Caco-2 (cell line): ENCODE measurements at regions of chr18 and their contacts with region 1.

Region 1: GRCh38 chr18:67104700-67105284 is 411.7 kb downstream of the DSEL start:
- DNase-seq: peak; percentile 41 to 57
- H3K4me3 ChIP-seq: no peak overlapping the region
- H3K4me3 Mint-ChIP-seq: no peak overlapping the region
- H3K27ac Mint-ChIP-seq: no peak overlapping the region
- H3K4me1 ChIP-seq: no peaks in the 10 kb centered on the region
- H3K4me1 Mint-ChIP-seq: no peaks in the 10 kb centered on the region
- H3K27me3 ChIP-seq: no peaks in the 10 kb centered on the region
- H3K27me3 Mint-ChIP-seq: peaks cover 3% of the 10 kb centered on the region
- CTCF ChIP-seq: peak; percentile 54 to 66

Region 2: DNA sequence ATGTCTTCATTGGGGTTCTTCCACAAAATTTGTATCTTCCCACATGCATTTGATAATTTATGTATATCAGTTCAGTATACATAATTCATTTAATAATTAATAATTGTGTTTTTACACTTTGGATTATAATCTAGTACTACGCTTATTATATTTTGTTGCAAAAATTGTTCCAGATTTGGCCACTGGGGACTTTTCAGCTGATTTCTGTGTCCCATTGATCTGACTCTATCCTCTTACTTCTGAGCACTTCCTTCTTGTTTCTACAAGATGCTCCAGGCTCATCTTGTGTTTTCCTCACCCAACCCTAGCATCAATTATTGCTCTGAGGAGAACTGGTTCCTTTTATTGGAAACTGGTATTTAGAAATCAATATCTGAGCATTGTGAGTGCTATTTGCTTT is 285.6 kb before region 1 on chr18:
- CTCF ChIA-PET with region 1: no interaction called
- POLR2A ChIA-PET with region 1: no interaction called
- intact Hi-C with region 1: no loop called
- DNase-seq: no peak
- H3K4me3 ChIP-seq: no peak overlapping the region
- H3K4me3 Mint-ChIP-seq: no peak overlapping the region
- H3K27ac Mint-ChIP-seq: no peak overlapping the region
- H3K4me1 ChIP-seq: no peaks in the 10 kb centered on the region
- H3K4me1 Mint-ChIP-seq: no peaks in the 10 kb centered on the region
- H3K27me3 ChIP-seq: no peaks in the 10 kb centered on the region
- H3K27me3 Mint-ChIP-seq: no peaks in the 10 kb centered on the region
- CTCF ChIP-seq: peak in 1 of 2 experiments; percentile 11

Region 3: DNA sequence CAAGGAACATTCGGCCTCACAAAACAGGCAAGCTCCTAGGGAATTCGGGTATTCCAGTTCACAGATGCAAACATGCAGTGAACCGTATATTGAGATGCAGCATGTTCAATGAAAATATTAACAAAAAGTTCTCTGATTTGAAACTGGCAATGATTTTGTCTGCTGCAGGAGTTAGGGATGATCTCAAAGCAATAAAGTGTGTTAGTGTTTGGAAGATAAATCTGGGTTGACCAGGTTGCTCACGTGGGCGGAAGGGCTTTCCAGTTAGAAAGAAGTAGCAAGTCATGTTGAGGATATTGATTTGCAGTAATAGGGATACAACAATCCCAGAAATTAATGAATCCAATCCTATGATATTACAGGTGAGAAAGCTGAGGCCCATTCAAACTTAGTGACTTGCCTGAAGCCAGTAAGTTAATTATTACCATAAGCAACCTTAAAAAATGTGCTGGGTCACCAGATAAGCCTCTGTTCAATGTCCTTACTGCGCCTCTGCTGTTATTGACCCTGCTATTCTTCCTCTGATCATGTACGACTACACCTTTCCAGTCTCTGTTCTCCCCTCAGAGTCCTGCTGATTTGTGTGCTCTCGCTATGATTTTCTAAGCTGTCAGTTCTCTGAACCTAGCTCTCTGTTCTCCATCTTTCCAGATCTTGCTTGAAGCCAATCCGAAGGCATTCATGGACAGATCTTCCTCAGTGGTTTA is 40.9 kb after region 1 on chr18:
- CTCF ChIA-PET with region 1: no interaction called
- POLR2A ChIA-PET with region 1: no interaction called
- intact Hi-C with region 1: loop called (anchors 1 kb)
- DNase-seq: peak; percentile 22 to 31
- H3K4me3 ChIP-seq: no peak overlapping the region
- H3K4me3 Mint-ChIP-seq: peak overlapping the region; percentile 28
- H3K27ac Mint-ChIP-seq: peak overlapping the region; percentile 4
- H3K4me1 ChIP-seq: peaks cover 7% of the 10 kb centered on the region; the same call in 1 of the 2 replicates
- H3K4me1 Mint-ChIP-seq: peaks cover 10% of the 10 kb centered on the region
- H3K27me3 ChIP-seq: no peaks in the 10 kb centered on the region
- H3K27me3 Mint-ChIP-seq: no peaks in the 10 kb centered on the region
- CTCF ChIP-seq: no peak

Region 4: DNA sequence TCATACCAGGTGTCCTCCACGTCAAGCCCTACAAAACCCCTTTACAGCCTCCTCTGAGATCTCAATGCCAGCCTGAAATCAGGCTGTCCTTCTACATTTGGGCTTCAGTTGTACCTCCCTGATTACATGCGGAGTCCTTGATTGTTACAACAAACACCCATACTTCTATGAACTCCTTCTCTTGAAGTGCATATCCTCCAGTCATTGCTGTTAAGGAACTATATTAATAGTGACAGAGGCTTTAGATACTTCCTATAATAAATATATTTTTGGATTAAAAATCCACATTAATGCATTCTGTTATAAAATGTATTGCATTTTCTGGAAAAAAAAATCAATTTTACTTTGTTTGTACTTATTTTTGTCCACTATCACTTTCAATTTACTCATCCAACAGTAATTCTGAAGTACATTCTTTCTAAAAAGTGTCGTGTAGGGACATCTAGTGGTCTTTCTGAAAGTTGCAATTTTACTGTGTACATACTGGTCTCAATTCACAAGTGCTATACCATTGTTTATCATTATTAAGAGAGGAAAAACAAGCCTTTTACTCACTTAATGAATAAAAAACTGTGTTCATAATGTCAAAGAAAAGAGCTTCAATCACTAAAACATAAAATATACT is 95.3 kb after region 1 on chr18:
- CTCF ChIA-PET with region 1: interaction called, 5 read pairs
- POLR2A ChIA-PET with region 1: no interaction called
- intact Hi-C with region 1: loop called (anchors 1 kb)
- DNase-seq: peak in 1 of 2 experiments; percentile 26
- H3K4me3 ChIP-seq: no peak overlapping the region
- H3K4me3 Mint-ChIP-seq: no peak overlapping the region
- H3K27ac Mint-ChIP-seq: no peak overlapping the region
- H3K4me1 ChIP-seq: no peaks in the 10 kb centered on the region
- H3K4me1 Mint-ChIP-seq: no peaks in the 10 kb centered on the region
- H3K27me3 ChIP-seq: no peaks in the 10 kb centered on the region
- H3K27me3 Mint-ChIP-seq: no peaks in the 10 kb centered on the region
- CTCF ChIP-seq: peak; percentile 27 to 32